ENCODE measurements at regions of chr9 and their contacts with region 1.

Region 1: DNA sequence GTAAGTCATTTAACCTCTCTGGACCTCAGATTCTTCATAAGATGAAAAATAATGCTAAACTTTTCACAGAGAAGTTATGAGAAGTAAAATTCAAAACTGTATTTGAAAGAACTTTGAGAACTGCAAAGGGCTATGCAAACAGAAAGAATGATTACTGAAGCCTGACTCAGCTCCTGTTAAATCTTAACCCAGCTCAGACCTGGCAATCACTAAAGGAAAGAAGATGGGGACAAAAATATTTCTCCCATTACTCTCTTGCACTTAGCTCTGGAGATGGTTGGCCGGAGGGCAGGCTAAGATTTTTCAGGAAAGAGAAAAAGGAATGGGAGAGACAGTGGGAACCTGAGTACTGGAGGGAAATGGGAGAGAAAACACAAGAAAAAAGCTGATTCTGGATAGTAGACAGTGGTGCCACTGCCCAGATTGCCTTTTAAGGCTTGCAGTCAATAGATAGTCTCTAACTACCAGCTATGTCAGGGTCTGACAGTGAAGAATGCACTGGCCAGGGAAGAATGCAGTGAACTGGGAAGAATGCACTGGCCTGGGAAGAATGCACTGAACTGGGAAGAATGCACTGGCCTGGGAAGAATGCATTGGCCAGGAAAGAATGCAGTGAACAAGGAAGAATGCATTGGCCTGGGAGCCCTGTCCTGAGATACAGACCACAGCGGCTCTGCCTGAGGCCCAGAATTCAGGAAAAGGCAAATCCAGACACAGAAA is 25.2 kb upstream of the CEMIP2 start:
- DNase-seq: peak; percentile 76
- ATAC-seq: peak; percentile 97
- H3K4me3 ChIP-seq: no peak overlapping the region
- H3K27ac ChIP-seq: peak overlapping the region; percentile 47
- H3K4me1 ChIP-seq: peaks cover 35% of the 10 kb centered on the region
- H3K27me3 ChIP-seq: no peaks in the 10 kb centered on the region
- CTCF ChIP-seq: no peak
- EP300 ChIP-seq: peak in 1 of 2 experiments; percentile 48; a peak in 1 of 4 replicates
- POLR2A ChIP-seq: no peak
- RAD21 ChIP-seq: no peak

Region 2: GRCh38 chr9:71048280-71048679 is 745.3 kb before region 1 on chr9:
- CTCF ChIA-PET with region 1: no interaction called
- POLR2A ChIA-PET with region 1: no interaction called
- in situ Hi-C with region 1: no loop called
- intact Hi-C with region 1: no loop called
- DNase-seq: no peak
- ATAC-seq: no peak
- H3K4me3 ChIP-seq: no peak overlapping the region
- H3K27ac ChIP-seq: no peak overlapping the region
- H3K4me1 ChIP-seq: no peaks in the 10 kb centered on the region
- H3K27me3 ChIP-seq: no peaks in the 10 kb centered on the region
- CTCF ChIP-seq: no peak
- EP300 ChIP-seq: no peak
- POLR2A ChIP-seq: no peak
- RAD21 ChIP-seq: no peak

Region 3: DNA sequence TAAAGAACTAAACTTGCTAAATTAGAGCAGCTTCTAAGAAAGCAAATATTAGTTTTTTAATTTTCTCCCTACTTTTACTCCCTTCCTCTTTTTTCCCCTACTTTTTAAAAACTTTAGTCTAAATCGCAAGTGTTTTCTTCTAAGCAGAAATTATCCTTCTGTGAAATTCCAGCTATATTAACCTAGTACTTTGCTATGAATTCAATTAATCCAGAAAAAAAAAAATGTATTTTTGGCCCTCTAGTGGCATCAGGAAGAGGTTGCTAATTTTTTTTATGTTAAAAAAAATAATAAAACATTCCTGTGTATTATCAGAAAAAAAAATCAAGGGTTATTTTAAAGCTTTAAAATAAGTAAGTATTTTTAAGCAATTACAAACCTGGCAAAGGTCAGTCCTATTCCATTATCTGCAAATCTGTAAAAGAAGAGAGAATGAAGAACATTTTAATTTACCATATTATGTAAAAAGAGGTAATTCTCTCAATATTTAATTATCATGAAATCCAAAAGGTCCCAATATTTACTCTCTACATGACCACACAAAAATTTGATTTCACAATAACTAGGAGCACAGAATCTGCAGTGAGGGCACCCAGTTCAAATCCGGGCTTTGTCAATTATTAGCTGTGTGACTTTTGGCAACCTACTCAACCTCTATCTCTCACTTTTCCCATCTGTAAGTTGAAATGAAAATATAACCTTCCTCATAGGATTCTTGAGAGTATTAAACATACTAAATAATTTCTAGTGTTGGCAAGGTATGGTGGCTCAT is 77.2 kb before region 1 on chr9:
- CTCF ChIA-PET with region 1: no interaction called
- POLR2A ChIA-PET with region 1: no interaction called
- in situ Hi-C with region 1: no loop called
- intact Hi-C with region 1: no loop called
- DNase-seq: no peak
- ATAC-seq: no peak
- H3K4me3 ChIP-seq: no peak overlapping the region
- H3K27ac ChIP-seq: no peak overlapping the region
- H3K4me1 ChIP-seq: peaks cover 11% of the 10 kb centered on the region; the same call in 1 of the 2 replicates
- H3K27me3 ChIP-seq: no peaks in the 10 kb centered on the region
- CTCF ChIP-seq: no peak
- EP300 ChIP-seq: no peak
- POLR2A ChIP-seq: no peak
- RAD21 ChIP-seq: no peak

Region 4: GRCh38 chr9:71783120-71783530 is 10.4 kb before region 1 on chr9:
- CTCF ChIA-PET with region 1: no interaction called
- POLR2A ChIA-PET with region 1: interaction called, 3 read pairs
- in situ Hi-C with region 1: no loop called
- intact Hi-C with region 1: loop called (anchors 1 kb)
- DNase-seq: peak; percentile 45
- ATAC-seq: peak; percentile 92
- H3K4me3 ChIP-seq: peak overlapping the region; percentile 50 to 66 (median 51); a peak in 5 of 6 replicates
- H3K27ac ChIP-seq: no peak overlapping the region
- H3K4me1 ChIP-seq: peaks cover 23% of the 10 kb centered on the region
- H3K27me3 ChIP-seq: no peaks in the 10 kb centered on the region
- CTCF ChIP-seq: peak; percentile 55
- EP300 ChIP-seq: no peak
- POLR2A ChIP-seq: no peak
- RAD21 ChIP-seq: no peak

Measured in HepG2 (cell line).